CD4-positive, alpha-beta T cell (primary cell): ENCODE measurements at regions of chr6 and their contacts with region 1.

Region 1: GRCh38 chr6:158869826-158870648 is 50.9 kb upstream of the EZR start:
- DNase-seq: peak in 10 of 14 experiments; percentile 31 to 98 (median 96)
- ATAC-seq: peak; percentile 77
- H3K4me3 ChIP-seq: peak overlapping the region; percentile 65
- H3K4me3 Mint-ChIP-seq: peak overlapping the region; percentile 85
- H3K27ac ChIP-seq: peak overlapping the region; percentile 98 to 100
- H3K27ac Mint-ChIP-seq: peak overlapping the region; percentile 99
- H3K4me1 ChIP-seq: peaks cover 21% of the 10 kb centered on the region
- H3K4me1 Mint-ChIP-seq: peaks cover 37% of the 10 kb centered on the region
- H3K27me3 ChIP-seq: no peaks in the 10 kb centered on the region
- H3K27me3 Mint-ChIP-seq: no peaks in the 10 kb centered on the region
- CTCF ChIP-seq: no peak

Region 2: GRCh38 chr6:158122048-158122447 is 748.0 kb before region 1 on chr6:
- CTCF ChIA-PET with region 1: no interaction called
- POLR2A ChIA-PET with region 1: no interaction called
- intact Hi-C with region 1: no loop called
- DNase-seq: no peak
- ATAC-seq: no peak
- H3K4me3 ChIP-seq: no peak overlapping the region
- H3K4me3 Mint-ChIP-seq: no peak overlapping the region
- H3K27ac ChIP-seq: no peak overlapping the region
- H3K27ac Mint-ChIP-seq: no peak overlapping the region
- H3K4me1 ChIP-seq: no peaks in the 10 kb centered on the region
- H3K4me1 Mint-ChIP-seq: no peaks in the 10 kb centered on the region
- H3K27me3 ChIP-seq: no peaks in the 10 kb centered on the region
- H3K27me3 Mint-ChIP-seq: no peaks in the 10 kb centered on the region
- CTCF ChIP-seq: no peak

Region 3: GRCh38 chr6:158704181-158704822 is 165.7 kb before region 1 on chr6:
- CTCF ChIA-PET with region 1: no interaction called
- POLR2A ChIA-PET with region 1: no interaction called
- intact Hi-C with region 1: no loop called
- DNase-seq: peak; percentile 43 to 89 (median 74)
- ATAC-seq: peak; percentile 96
- H3K4me3 ChIP-seq: peak overlapping the region; percentile 44
- H3K4me3 Mint-ChIP-seq: peak overlapping the region; percentile 69
- H3K27ac ChIP-seq: no peak overlapping the region
- H3K27ac Mint-ChIP-seq: no peak overlapping the region
- H3K4me1 ChIP-seq: peaks cover 17% of the 10 kb centered on the region
- H3K4me1 Mint-ChIP-seq: peaks cover 6% of the 10 kb centered on the region
- H3K27me3 ChIP-seq: no peaks in the 10 kb centered on the region
- H3K27me3 Mint-ChIP-seq: no peaks in the 10 kb centered on the region
- CTCF ChIP-seq: peak; percentile 99

Region 4: GRCh38 chr6:158769771-158770432 is 100.1 kb before region 1 on chr6:
- CTCF ChIA-PET with region 1: no interaction called
- POLR2A ChIA-PET with region 1: interaction called, 12 read pairs
- intact Hi-C with region 1: no loop called
- DNase-seq: peak in 1 of 14 experiments; percentile 41
- ATAC-seq: no peak
- H3K4me3 ChIP-seq: no peak overlapping the region
- H3K4me3 Mint-ChIP-seq: peak overlapping the region; percentile 38
- H3K27ac ChIP-seq: no peak overlapping the region
- H3K27ac Mint-ChIP-seq: peak overlapping the region; percentile 74
- H3K4me1 ChIP-seq: peaks cover 44% of the 10 kb centered on the region
- H3K4me1 Mint-ChIP-seq: peaks cover 47% of the 10 kb centered on the region
- H3K27me3 ChIP-seq: no peaks in the 10 kb centered on the region
- H3K27me3 Mint-ChIP-seq: peaks cover 5% of the 10 kb centered on the region
- CTCF ChIP-seq: no peak

Region 5: DNA sequence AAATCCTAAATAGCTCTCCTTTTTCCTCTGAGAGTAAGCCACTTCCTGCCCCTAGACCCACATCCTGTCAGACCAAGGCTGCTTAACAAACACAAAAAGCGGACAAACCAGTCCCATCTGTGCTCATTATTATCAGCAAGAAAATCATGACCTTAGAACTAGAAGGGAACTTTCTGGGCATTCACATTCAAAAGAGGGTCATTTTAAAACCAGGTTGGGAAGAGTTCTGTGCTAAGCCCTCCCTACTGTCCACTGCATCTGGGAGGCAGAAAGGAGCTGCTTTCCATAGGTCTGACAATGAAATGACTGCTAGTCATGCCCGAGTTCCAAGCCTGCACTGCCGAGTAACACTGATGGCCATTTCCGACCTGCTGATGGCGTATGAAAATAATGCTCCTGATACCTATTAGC is 66.3 kb before region 1 on chr6:
- CTCF ChIA-PET with region 1: interaction called, 3 read pairs
- POLR2A ChIA-PET with region 1: interaction called, 71 read pairs
- intact Hi-C with region 1: no loop called
- DNase-seq: peak in 7 of 14 experiments; percentile 29 to 90 (median 45)
- ATAC-seq: peak; percentile 60
- H3K4me3 ChIP-seq: peak overlapping the region; percentile 45
- H3K4me3 Mint-ChIP-seq: peak overlapping the region; percentile 77
- H3K27ac ChIP-seq: peak overlapping the region; percentile 21 to 82
- H3K27ac Mint-ChIP-seq: peak overlapping the region; percentile 75
- H3K4me1 ChIP-seq: peaks cover 80% of the 10 kb centered on the region
- H3K4me1 Mint-ChIP-seq: peaks cover 100% of the 10 kb centered on the region
- H3K27me3 ChIP-seq: no peaks in the 10 kb centered on the region
- H3K27me3 Mint-ChIP-seq: no peaks in the 10 kb centered on the region
- CTCF ChIP-seq: no peak

Region 6: DNA sequence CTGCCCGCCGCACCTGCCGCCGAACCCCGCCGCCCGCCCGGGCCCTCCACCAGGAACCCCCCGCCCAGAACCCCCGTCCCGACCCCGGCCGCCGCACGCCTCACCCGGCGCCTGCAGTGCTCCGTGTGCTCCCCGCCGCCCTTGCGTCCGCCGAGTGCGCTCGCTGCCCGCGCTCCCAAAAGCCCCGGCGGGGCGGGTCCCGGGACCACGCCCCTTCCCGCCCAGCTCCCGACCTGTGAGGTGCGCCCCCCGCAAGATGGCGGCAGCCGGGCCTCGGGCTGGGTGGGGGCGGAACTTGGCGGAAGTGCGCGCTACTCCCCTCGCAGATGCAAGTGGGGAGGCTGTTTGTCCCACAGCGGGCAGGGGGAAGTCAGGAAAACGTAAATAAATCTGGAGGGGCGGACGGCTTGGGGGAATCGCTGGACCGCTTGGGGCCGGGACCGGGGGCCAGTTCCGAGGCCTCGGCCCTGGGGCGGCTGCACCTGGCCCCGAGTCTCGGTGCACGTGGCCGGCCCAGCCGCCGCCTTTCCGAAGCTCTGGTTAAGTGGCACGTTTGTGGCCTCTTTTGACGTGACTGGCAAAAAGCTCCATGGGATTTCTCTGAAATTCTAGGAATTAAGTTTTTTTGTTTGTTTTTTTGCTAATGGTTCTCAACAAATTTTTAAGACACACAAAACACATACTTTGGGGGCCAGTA is 50.7 kb before region 1 on chr6 and contains the start of gene EZR:
- CTCF ChIA-PET with region 1: interaction called, 11 read pairs
- POLR2A ChIA-PET with region 1: interaction called, 75 read pairs
- intact Hi-C with region 1: loop called (anchors 1 kb)
- DNase-seq: peak; percentile 64 to 95 (median 80)
- ATAC-seq: peak; percentile 58
- H3K4me3 ChIP-seq: peak within 1 kb of the TSS; percentile 88
- H3K4me3 Mint-ChIP-seq: peak within 1 kb of the TSS; percentile 99
- H3K27ac ChIP-seq: peak within 1 kb of the TSS; percentile 96 to 97
- H3K27ac Mint-ChIP-seq: peak within 1 kb of the TSS; percentile 95
- H3K4me1 ChIP-seq: peaks cover 39% of the 10 kb centered on the region
- H3K4me1 Mint-ChIP-seq: peaks cover 49% of the 10 kb centered on the region
- H3K27me3 ChIP-seq: no peaks in the 10 kb centered on the region
- H3K27me3 Mint-ChIP-seq: no peaks in the 10 kb centered on the region
- CTCF ChIP-seq: no peak
- total RNA-seq, gene EZR: 434 to 449 TPM

Region 7: DNA sequence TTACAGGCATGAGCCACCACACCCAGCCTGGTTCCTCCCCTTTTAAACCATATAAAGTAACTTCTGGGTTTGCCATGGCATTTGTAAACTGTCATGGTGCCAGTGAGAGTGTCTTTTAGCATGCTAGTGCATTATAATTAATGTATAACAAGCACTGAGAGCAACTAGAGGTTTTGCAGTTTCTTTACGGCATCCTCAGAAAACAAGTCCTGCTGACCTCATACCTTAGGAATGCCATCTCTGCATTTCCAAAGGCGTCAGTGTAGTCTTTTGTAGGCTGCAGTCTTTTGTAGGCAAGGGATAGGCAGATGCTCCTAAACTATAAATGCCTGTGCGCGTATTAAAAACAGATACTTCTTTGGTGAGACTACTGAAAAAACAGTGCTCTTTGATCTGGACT is 24.2 kb after region 1 on chr6:
- CTCF ChIA-PET with region 1: no interaction called
- POLR2A ChIA-PET with region 1: interaction called, 12 read pairs
- intact Hi-C with region 1: no loop called
- DNase-seq: no peak
- ATAC-seq: no peak
- H3K4me3 ChIP-seq: no peak overlapping the region
- H3K4me3 Mint-ChIP-seq: no peak overlapping the region
- H3K27ac ChIP-seq: no peak overlapping the region
- H3K27ac Mint-ChIP-seq: no peak overlapping the region
- H3K4me1 ChIP-seq: no peaks in the 10 kb centered on the region
- H3K4me1 Mint-ChIP-seq: no peaks in the 10 kb centered on the region
- H3K27me3 ChIP-seq: no peaks in the 10 kb centered on the region
- H3K27me3 Mint-ChIP-seq: no peaks in the 10 kb centered on the region
- CTCF ChIP-seq: no peak

Region 8: GRCh38 chr6:158962371-158962770 is 92.3 kb after region 1 on chr6:
- CTCF ChIA-PET with region 1: no interaction called
- POLR2A ChIA-PET with region 1: interaction called, 4 read pairs
- intact Hi-C with region 1: loop called in 1 of 2 experiments (anchors 10 kb)
- DNase-seq: no peak
- ATAC-seq: no peak
- H3K4me3 ChIP-seq: no peak overlapping the region
- H3K4me3 Mint-ChIP-seq: no peak overlapping the region
- H3K27ac ChIP-seq: no peak overlapping the region
- H3K27ac Mint-ChIP-seq: no peak overlapping the region
- H3K4me1 ChIP-seq: no peaks in the 10 kb centered on the region
- H3K4me1 Mint-ChIP-seq: no peaks in the 10 kb centered on the region
- H3K27me3 ChIP-seq: no peaks in the 10 kb centered on the region
- H3K27me3 Mint-ChIP-seq: no peaks in the 10 kb centered on the region
- CTCF ChIP-seq: no peak

Region 9: GRCh38 chr6:159151266-159151855 is 281.3 kb after region 1 on chr6:
- CTCF ChIA-PET with region 1: no interaction called
- POLR2A ChIA-PET with region 1: no interaction called
- intact Hi-C with region 1: no loop called
- DNase-seq: peak in 9 of 14 experiments; percentile 17 to 68 (median 26)
- ATAC-seq: peak; percentile 41
- H3K4me3 ChIP-seq: no peak overlapping the region
- H3K4me3 Mint-ChIP-seq: no peak overlapping the region
- H3K27ac ChIP-seq: no peak overlapping the region
- H3K27ac Mint-ChIP-seq: no peak overlapping the region
- H3K4me1 ChIP-seq: no peaks in the 10 kb centered on the region
- H3K4me1 Mint-ChIP-seq: peaks cover 10% of the 10 kb centered on the region
- H3K27me3 ChIP-seq: no peaks in the 10 kb centered on the region
- H3K27me3 Mint-ChIP-seq: peaks cover 18% of the 10 kb centered on the region
- CTCF ChIP-seq: peak; percentile 95